Left ventricle myocardium superior (tissue), 1 donor: ENCODE measurements at regions of chr6 and their contacts with region 1.

Region 1: GRCh38 chr6:41787219-41787917 is at the start of gene TOMM6:
- DNase-seq: peak; percentile 97
- ATAC-seq: peak; percentile 84
- total RNA-seq, gene TOMM6: 216 TPM

Region 2: GRCh38 chr6:41344876-41345275 is 442.5 kb before region 1 on chr6:
- intact Hi-C with region 1: no loop called
- DNase-seq: no peak
- ATAC-seq: no peak

Region 3: DNA sequence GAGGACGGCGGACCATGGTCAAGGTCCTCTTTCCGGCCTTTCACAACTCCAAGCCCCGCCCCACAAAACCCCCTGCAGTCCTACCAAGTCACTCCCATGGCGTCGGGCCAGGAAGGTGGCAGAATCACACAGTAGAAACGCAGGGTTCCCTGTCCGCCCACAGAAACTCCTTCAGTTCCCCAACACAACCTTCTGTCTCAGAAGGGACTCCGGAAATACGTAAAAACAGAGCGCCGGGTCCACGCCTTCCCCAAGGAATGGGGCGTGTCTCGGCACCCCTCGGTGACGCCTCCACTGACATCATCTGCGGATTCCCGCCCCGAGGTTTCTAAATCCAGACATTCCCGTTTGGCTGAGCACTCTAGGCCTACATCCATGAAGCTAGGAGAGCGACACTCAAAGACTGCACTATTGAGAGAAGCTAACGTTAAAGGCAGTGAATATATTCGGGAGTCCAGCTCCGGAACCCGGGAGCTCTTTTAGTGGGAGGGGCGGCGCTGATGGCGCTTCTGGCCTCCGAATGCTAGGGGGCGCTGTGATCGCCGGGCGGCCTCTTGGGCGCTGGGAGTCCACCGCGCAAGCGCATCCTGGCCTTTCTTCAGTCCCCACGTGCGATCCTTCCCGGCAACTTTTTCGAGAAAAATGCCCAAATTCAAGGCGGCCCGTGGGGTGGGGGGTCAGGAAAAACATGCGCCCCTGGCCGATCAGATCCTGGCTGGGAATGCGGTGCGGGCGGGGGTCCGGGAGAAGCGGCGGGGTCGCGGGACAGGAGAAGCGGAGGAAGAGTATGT is 133.7 kb after region 1 on chr6 and contains the starts of genes BYSL and MED20:
- intact Hi-C with region 1: loop called (anchors 5 kb)
- DNase-seq: peak; percentile 95
- ATAC-seq: peak; percentile 99
- total RNA-seq, gene BYSL: 8.4 TPM
- total RNA-seq, gene MED20: 18.7 TPM

Region 4: GRCh38 chr6:42043787-42044475 is 256.6 kb after region 1 on chr6:
- intact Hi-C with region 1: loop called (anchors 10 kb)
- DNase-seq: peak; percentile 89
- ATAC-seq: peak; percentile 58

Region 5: DNA sequence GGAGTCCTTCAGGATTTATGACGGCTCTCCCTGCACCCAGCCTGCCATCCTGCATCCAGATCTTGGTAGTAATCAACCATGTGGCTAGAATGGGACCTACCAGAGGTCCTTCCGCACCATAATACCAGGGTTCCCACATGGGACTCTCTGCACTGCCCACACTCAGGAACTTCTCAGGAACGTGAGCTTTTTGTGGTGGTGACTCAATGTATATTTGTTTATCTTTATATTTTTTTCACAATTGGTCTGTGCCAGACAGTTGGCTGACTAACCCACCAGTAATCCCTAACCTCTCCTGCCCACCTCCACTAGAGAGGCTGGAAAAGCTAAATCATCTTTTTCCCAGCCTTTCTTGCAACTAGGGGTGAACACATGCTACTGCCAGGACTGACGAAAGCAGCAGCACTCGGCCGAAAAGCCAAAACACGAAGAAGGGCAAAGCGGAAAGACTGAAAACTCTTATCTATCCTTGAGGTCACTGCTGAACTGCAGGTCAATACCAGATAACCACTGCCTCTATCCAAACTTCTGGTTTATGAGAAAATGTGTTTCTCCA is 551.4 kb after region 1 on chr6:
- intact Hi-C with region 1: no loop called
- DNase-seq: no peak
- ATAC-seq: no peak